IMR-90 (cell line): ENCODE measurements at regions of chr3 and their contacts with region 1.

Region 1: DNA sequence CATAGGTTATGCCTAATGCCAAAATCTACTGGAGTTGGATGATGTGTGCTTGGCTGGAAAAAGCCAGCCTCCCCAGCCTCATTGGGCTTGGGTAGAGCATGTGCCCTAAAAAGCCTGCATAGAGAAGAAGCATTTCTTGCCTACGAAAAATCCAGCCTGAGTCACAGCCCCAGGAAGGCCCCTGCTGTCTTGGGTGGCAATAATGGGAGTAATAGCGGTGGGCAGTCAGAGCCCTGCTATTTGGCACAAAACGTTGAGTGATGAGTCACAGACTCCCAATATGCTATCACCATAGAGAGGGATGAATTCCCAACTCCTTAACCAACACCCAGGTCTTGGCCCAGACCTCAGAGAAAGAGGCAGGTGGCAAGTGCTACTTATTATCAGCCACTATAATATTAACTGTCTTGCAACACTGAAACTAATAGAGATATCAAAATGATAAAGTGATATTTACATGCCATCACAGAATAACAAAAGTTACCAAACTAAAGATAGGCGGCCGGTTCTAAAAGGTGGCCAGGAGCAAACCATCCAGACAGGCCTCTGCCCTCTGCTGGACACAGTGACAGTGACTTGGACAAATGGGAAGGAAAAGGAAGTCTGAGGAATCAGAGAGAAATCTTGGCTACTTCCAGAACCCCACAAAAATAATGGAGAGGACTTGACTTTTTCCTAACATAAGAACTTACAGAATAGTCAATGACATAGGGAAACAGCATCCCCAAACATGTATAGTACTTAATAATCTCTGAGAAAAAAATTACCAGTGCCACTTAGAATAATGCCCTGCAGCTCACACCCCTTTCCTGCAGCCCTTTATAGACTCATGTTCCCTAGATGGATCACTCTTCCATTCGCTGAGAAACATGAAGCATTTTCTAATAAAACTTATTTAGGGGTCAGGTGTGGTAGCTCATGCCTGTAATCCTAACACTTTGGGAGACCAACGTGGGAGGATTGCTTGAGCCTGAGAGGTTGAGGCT is 51.9 kb upstream of the MUC13 start:
- DNase-seq: peak; percentile 96
- ATAC-seq: peak; percentile 73
- H3K4me3 ChIP-seq: no peak overlapping the region
- H3K27ac ChIP-seq: peak overlapping the region; percentile 73
- H3K4me1 ChIP-seq: peaks cover 15% of the 10 kb centered on the region
- H3K27me3 ChIP-seq: no peaks in the 10 kb centered on the region
- CTCF ChIP-seq: peak; percentile 41
- POLR2A ChIP-seq: no peak
- RAD21 ChIP-seq: peak; percentile 27; the same call in 1 of the 2 replicates

Region 2: DNA sequence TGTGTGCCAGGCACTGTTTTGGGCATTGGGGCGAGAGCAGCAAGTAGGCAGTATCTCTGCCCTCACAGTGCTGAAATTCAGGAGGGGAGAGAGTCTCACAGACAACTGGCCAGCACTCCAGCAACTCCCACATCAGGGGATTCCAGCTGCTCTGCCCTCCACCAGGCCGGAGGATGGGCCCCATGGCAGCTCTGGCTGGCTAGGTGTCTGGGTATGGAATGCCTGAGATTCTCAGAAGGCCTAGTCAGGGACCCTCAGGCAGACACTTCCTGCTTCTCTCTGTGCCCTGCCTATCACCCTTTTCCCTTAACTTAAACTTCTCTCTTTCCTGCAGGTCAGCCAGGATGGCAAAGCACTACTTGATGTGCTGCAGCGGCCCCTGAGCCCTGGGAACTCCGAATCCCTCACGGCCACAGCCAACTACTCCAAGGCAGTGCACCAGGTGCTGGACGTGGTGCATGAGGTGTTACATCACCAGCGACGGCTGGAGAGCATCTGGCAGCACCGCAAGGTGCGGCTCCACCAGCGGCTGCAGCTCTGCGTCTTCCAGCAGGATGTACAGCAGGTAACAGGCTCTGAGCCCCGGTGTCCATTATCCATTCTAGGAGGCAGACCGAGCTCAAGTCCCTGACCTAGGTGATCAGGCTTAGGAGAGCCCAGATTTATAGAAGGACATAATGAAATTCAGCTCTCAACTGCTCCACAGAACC is 652.4 kb before region 1 on chr3:
- CTCF ChIA-PET with region 1: no interaction called
- POLR2A ChIA-PET with region 1: no interaction called
- dilution Hi-C with region 1: no loop called
- in situ Hi-C with region 1: no loop called
- intact Hi-C with region 1: no loop called
- DNase-seq: no peak
- ATAC-seq: no peak
- H3K4me3 ChIP-seq: no peak overlapping the region
- H3K27ac ChIP-seq: no peak overlapping the region
- H3K4me1 ChIP-seq: no peaks in the 10 kb centered on the region
- H3K27me3 ChIP-seq: no peaks in the 10 kb centered on the region; the same call in 1 of the 2 replicates
- CTCF ChIP-seq: no peak
- POLR2A ChIP-seq: no peak
- RAD21 ChIP-seq: no peak

Region 3: DNA sequence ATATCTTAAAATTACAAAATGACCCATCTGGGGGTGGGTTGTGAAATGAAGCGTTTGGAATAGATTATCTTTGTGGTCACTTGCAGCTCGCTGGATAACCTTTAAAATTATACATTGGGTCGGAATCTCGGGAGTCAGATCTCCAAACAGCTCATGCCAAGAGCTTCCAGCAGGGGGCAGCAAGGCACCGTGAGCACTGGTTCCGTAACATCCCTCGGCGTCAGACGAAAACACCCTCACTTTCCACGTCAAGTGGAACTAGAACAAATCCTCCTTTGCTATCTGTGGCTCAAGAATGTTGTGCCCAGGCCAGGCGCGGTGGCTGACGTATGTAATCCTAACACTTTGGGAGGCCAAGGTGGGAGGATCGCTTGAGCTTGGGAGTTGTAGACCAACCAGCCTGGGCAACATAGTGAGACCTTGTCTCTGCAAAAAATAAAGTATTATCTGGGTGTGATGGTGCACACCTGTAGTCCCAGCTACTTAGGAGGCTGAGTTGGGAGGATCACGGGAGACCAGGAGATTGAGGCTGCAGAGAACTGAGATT is 225.1 kb before region 1 on chr3:
- CTCF ChIA-PET with region 1: interaction called, 4 read pairs
- POLR2A ChIA-PET with region 1: no interaction called
- dilution Hi-C with region 1: no loop called
- in situ Hi-C with region 1: no loop called
- intact Hi-C with region 1: loop called (anchors 2 kb)
- DNase-seq: peak; percentile 89
- ATAC-seq: peak; percentile 85
- H3K4me3 ChIP-seq: no peak overlapping the region
- H3K27ac ChIP-seq: no peak overlapping the region
- H3K4me1 ChIP-seq: peaks cover 7% of the 10 kb centered on the region
- H3K27me3 ChIP-seq: no peaks in the 10 kb centered on the region
- CTCF ChIP-seq: peak; percentile 96
- POLR2A ChIP-seq: peak; percentile 39; the same call in 1 of the 2 replicates
- RAD21 ChIP-seq: peak; percentile 98

Region 4: GRCh38 chr3:124941771-124942170 is 44.7 kb before region 1 on chr3:
- CTCF ChIA-PET with region 1: no interaction called
- POLR2A ChIA-PET with region 1: no interaction called
- dilution Hi-C with region 1: no loop called
- in situ Hi-C with region 1: no loop called
- intact Hi-C with region 1: no loop called
- DNase-seq: no peak
- ATAC-seq: no peak
- H3K4me3 ChIP-seq: no peak overlapping the region
- H3K27ac ChIP-seq: no peak overlapping the region
- H3K4me1 ChIP-seq: no peaks in the 10 kb centered on the region
- H3K27me3 ChIP-seq: peaks cover 6% of the 10 kb centered on the region; the same call in 1 of the 2 replicates
- CTCF ChIP-seq: no peak
- POLR2A ChIP-seq: no peak
- RAD21 ChIP-seq: no peak

Region 5: DNA sequence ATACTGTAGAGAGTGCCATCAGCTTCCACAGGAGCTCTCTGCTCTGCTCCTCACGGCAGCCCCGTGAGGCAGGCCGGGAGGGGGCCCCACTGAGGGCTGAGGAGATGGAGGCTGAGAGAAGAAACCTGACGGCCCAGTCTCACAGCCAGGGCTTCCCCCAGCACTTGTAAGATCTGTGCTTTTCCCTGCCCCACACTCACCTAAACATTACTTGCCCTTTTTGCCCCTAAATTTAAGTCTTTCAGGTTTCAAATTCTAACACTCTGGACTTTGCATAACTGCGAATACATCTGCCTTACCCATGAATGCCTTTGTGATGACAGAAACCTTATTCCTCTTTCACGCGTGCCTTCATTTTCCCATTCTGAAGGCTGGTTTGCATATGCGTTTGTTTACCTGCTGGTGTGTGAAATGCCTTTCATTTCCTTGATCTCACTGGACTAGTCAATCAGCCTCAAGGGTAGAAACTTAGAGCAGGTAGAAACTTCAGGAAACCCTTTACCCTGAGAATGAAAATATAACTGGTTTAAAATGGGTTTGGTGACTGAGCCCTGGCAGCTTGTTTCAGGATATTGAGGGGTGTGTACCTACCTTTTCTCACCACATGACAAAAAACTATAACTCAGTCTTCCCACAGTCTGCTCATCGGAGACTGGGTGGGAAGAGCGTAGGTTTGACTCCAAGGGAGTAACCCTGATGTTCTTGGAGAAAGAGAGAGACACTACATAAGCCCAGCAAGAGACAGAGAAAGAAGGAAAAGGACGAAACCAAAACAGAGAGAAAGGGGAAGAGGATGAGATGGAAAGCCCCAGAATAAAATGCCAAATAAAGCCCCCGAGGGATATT is 206.0 kb after region 1 on chr3:
- CTCF ChIA-PET with region 1: no interaction called
- POLR2A ChIA-PET with region 1: no interaction called
- dilution Hi-C with region 1: no loop called
- in situ Hi-C with region 1: no loop called
- intact Hi-C with region 1: no loop called
- DNase-seq: no peak
- ATAC-seq: no peak
- H3K4me3 ChIP-seq: no peak overlapping the region
- H3K27ac ChIP-seq: no peak overlapping the region
- H3K4me1 ChIP-seq: peaks cover 17% of the 10 kb centered on the region
- H3K27me3 ChIP-seq: 0 out of 2 replicates have a peak, but pooled peaks cover 1% of the 10 kb centered on the region
- CTCF ChIP-seq: no peak
- POLR2A ChIP-seq: no peak
- RAD21 ChIP-seq: no peak

Region 6: DNA sequence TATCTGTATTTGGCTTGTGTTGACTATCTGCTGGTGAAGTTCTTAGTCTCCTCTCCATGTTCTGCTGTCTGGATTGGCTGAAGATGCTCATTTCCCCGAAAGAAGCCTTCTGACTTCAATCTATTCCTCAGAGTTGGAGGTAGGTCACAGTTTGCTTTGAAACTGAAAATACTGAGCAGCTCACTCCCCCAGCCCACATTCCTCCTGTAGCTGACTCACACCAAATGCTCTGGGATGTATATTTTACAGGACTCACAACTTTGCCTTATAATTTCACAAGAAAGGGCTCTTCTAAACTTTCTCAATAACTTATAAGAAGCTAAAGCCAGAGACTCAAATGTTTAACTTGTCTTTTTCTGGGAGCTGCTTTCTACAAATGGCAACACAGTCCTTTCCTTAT is 569.9 kb after region 1 on chr3:
- CTCF ChIA-PET with region 1: no interaction called
- POLR2A ChIA-PET with region 1: no interaction called
- dilution Hi-C with region 1: no loop called
- in situ Hi-C with region 1: no loop called
- intact Hi-C with region 1: no loop called
- DNase-seq: peak; percentile 89
- ATAC-seq: peak; percentile 99
- H3K4me3 ChIP-seq: no peak overlapping the region
- H3K27ac ChIP-seq: peak overlapping the region; percentile 31; the same call in 1 of the 2 replicates
- H3K4me1 ChIP-seq: peaks cover 8% of the 10 kb centered on the region; the same call in 1 of the 2 replicates
- H3K27me3 ChIP-seq: no peaks in the 10 kb centered on the region
- CTCF ChIP-seq: no peak
- POLR2A ChIP-seq: no peak
- RAD21 ChIP-seq: no peak